PC-3 (cell line): ENCODE measurements at regions of chr7 and their contacts with region 1.

Region 1: GRCh38 chr7:91557789-91558392 is 293.7 kb downstream of the FZD1 start:
- DNase-seq: peak; percentile 98
- ATAC-seq: peak; percentile 97
- H3K4me3 ChIP-seq: no peak overlapping the region
- H3K27ac ChIP-seq: peak overlapping the region; percentile 83
- H3K4me1 ChIP-seq: peaks cover 16% of the 10 kb centered on the region
- H3K27me3 ChIP-seq: no peaks in the 10 kb centered on the region
- CTCF ChIP-seq: no peak

Region 2: DNA sequence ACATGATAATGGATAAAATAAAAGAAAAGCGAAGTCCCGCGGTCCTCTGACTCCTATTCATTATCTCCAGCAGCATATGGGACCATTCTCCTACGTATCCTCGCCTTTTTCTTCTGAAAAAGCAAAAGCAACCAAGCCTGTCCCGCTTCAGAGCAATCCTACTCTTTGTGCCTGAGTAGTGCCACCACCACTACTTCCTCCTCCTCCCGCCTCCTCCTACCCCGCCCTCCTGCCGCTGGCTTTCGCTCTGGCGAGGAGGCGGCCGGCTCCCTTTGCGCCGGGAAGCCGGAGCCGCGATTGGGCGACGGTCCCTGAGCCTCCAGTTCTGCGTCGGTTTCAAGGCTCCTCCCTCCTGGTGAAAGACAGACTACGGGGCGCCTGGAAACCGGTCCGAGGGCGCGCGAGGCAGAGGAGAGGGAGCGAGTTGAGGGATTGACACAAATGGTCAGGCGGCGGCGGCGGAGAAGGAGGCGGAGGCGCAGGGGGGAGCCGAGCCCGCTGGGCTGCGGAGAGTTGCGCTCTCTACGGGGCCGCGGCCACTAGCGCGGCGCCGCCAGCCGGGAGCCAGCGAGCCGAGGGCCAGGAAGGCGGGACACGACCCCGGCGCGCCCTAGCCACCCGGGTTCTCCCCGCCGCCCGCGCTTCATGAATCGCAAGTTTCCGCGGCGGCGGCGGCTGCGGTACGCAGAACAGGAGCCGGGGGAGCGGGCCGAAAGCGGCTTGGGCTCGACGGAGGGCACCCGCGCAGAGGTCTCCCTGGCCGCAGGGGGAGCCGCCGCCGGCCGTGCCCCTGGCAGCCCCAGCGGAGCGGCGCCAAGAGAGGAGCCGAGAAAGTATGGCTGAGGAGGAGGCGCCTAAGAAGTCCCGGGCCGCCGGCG is 293.6 kb before region 1 on chr7 and contains the start of gene FZD1:
- CTCF ChIA-PET with region 1: no interaction called
- POLR2A ChIA-PET with region 1: no interaction called
- intact Hi-C with region 1: loop called (anchors 5 kb)
- DNase-seq: peak; percentile 95
- ATAC-seq: peak; percentile 78
- H3K4me3 ChIP-seq: peak within 1 kb of the TSS; percentile 78
- H3K27ac ChIP-seq: no peak within 1 kb of the TSS
- H3K4me1 ChIP-seq: peaks cover 10% of the 10 kb centered on the region
- H3K27me3 ChIP-seq: no peaks in the 10 kb centered on the region
- CTCF ChIP-seq: no peak
- total RNA-seq, gene FZD1: 2.7 and 3.1 TPM in 2 replicates

Region 3: GRCh38 chr7:91351374-91351773 is 206.5 kb before region 1 on chr7:
- CTCF ChIA-PET with region 1: no interaction called
- POLR2A ChIA-PET with region 1: no interaction called
- intact Hi-C with region 1: loop called (anchors 10 kb)
- DNase-seq: peak; percentile 80
- ATAC-seq: peak; percentile 99
- H3K4me3 ChIP-seq: no peak overlapping the region
- H3K27ac ChIP-seq: no peak overlapping the region
- H3K4me1 ChIP-seq: peaks cover 13% of the 10 kb centered on the region
- H3K27me3 ChIP-seq: no peaks in the 10 kb centered on the region
- CTCF ChIP-seq: no peak

Region 4: DNA sequence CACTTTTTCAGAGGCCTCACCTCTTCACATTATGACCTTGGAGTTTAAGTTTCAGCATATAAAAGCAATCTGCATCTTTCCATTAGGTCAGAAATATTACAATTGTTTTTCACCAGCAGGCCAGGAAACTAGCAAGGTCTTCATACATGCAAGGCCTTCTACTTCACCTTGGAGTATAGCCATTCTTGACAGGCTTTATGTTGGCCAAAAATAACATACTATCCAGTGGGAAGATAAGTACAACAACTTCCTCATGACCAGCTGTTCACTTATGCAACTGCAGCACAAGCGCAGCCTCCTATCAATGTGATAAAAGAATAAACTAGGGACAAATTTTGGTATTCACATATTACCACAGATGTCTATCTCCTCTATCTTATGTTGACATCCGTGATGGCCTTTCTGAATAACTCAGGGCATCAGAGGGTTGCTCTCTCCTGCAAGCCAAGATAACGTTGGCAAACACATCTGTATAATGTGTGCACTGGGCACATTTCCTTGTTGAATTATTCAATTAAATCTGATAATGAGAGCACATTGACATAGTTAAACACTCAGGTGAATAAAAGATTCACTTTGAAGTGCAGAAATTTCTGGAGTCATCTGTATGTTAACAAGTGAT is 53.8 kb before region 1 on chr7:
- CTCF ChIA-PET with region 1: no interaction called
- POLR2A ChIA-PET with region 1: no interaction called
- intact Hi-C with region 1: loop called (anchors 2 kb)
- DNase-seq: no peak
- ATAC-seq: no peak
- H3K4me3 ChIP-seq: no peak overlapping the region
- H3K27ac ChIP-seq: no peak overlapping the region
- H3K4me1 ChIP-seq: no peaks in the 10 kb centered on the region
- H3K27me3 ChIP-seq: no peaks in the 10 kb centered on the region
- CTCF ChIP-seq: no peak